Posterior vena cava (tissue), 2 donors: ENCODE measurements at regions of chr12 and their contacts with region 1.

Region 1: DNA sequence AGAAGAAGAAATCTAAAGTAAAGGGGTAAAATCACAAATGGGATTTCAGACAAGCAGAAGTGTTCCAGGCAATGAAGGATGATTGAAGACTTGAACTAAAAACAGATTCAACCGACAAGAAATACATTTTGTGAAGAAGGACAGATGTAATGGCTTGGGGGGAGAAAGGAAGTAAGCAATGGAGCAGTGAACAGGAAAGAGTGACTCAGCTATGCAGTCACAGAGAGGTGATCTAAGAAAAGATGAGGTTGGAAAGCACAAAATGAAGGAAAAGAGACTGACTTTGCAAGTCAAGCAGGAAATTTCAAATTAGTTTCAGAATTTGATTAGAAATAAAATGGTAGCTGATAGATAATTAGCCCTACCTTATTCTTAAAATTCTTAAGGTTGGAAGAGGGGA is 66.5 kb downstream of the PUS7L start:
- DNase-seq: no peak

Region 2: GRCh38 chr12:42299392-42300308 is 1392.4 kb before region 1 on chr12:
- intact Hi-C with region 1: loop called in 1 of 2 experiments (anchors 5 kb)
- DNase-seq: no peak